Cardiac septum (tissue), 1 donor: ENCODE measurements at regions of chr19 and their contacts with region 1.

Region 1: GRCh38 chr19:52748336-52748950 is 13.6 kb upstream of the ZNF611 start:
- DNase-seq: no peak

Region 2: DNA sequence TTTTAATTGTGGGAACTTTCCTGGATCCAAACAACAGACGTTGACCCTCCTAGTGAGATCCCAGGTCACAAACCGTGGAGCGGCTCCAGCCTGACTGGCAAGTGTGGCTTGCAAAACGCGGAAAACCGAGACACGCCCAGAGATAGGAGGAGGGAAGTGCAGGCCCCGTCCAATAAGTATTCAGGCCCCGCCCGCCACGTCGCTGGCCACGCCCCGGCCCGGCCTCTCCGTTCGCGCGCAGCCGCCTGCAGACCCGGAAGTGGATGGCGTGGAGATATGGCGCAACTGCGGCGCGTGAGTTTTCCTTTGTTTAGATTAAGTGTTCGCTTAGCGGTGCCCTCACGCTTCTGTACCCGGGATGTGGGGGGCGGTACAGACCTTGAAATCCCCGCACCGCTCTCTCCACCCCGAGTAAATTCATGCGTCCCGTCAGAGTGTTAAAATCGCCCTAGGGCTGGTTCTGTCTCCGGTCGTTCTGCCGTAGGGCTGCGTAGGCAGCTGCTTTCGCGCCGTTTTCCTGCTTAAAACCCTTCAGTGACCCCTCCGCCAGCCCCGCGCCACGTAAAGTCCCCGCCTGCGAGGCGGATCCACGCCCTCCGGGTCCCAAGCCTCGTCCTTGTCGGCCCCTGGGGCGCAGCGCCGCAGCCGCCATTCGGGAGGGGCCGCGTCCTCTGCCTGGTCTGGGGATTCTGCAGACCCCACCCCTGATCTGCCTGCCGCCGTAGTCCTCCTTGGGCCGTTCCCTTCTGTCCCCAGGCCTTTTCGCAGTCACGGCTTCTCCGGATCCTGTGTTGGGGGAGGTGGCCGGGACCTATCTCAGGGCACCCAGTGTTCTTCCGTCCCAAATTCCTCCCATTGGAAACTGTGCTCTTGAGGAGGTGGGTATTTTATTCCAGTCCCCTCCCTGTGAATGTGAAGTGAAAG is 478.8 kb before region 1 on chr19 and contains the start of gene ZNF766:
- intact Hi-C with region 1: loop called (anchors 10 kb)
- DNase-seq: peak; percentile 98
- total RNA-seq, gene ZNF766: 11.4 TPM